ENCODE measurements at regions of chr12 and their contacts with region 1.

Region 1: GRCh38 chr12:52307836-52308805 is 13.1 kb downstream of the KRT83 start:
- DNase-seq: peak; percentile 23 to 83
- H3K4me3 ChIP-seq: peak overlapping the region; percentile 39 to 67 (median 61)
- H3K27ac ChIP-seq: no peak overlapping the region
- H3K4me1 ChIP-seq: peaks cover 0 to 4% (median 0%) of the 10 kb centered on the region in 4 experiments; a peak in 1 of 7 replicates
- H3K27me3 ChIP-seq: peaks cover 21 to 47% (median 36%) of the 10 kb centered on the region in 4 experiments
- CTCF ChIP-seq: peak in 2 of 3 experiments; percentile 14 to 24; a peak in 2 of 4 replicates
- EP300 ChIP-seq: no peak
- POLR2A ChIP-seq: no peak
- RAD21 ChIP-seq: peak in 1 of 2 experiments; percentile 15; a peak in 1 of 4 replicates

Region 2: GRCh38 chr12:52147367-52147972 is 160.7 kb before region 1 on chr12:
- CTCF ChIA-PET with region 1: interaction called, 22 read pairs
- POLR2A ChIA-PET with region 1: no interaction called
- DNase-seq: no peak
- H3K4me3 ChIP-seq: no peak overlapping the region
- H3K27ac ChIP-seq: peak overlapping the region; percentile 73
- H3K4me1 ChIP-seq: peaks cover 8 to 44% (median 19%) of the 10 kb centered on the region in 4 experiments
- H3K27me3 ChIP-seq: no peaks in the 10 kb centered on the region; a peak in 1 of 7 replicates
- CTCF ChIP-seq: no peak
- EP300 ChIP-seq: no peak
- POLR2A ChIP-seq: no peak
- RAD21 ChIP-seq: no peak

Region 3: DNA sequence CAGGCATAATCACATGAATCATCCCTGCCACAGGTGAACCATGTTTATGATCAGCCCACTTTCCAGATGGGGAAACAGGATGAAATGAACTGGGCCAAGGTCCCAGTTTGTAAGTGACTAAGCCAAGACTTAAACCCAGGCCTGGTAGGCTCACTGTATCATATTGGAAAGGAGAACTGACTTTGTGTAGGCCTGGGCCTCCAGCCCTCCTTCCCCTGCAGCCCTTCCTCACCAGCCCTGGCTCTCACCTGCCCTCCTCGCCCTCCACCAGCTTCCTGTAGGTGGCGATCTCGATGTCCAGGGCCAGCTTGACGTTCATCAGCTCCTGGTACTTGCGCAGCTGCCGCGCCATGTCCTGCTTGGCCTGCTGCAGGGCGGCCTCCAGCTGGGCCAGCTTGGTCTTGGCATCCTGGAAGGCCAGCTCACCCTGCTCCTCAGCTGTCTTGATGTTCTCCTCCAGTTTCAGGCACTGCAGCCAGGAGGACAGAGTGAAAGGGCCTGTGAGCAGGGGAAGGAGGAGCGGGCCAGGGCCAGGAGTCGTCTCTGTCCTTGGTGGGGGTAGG is 136.1 kb before region 1 on chr12:
- CTCF ChIA-PET with region 1: interaction called, 11 read pairs
- POLR2A ChIA-PET with region 1: no interaction called
- DNase-seq: peak in 1 of 2 experiments; percentile 80
- H3K4me3 ChIP-seq: no peak overlapping the region
- H3K27ac ChIP-seq: no peak overlapping the region
- H3K4me1 ChIP-seq: peaks cover 0 to 2% (median 0%) of the 10 kb centered on the region in 4 experiments; a peak in 2 of 7 replicates
- H3K27me3 ChIP-seq: no peaks in the 10 kb centered on the region
- CTCF ChIP-seq: peak; percentile 79 to 86 (median 81)
- EP300 ChIP-seq: no peak
- POLR2A ChIP-seq: no peak
- RAD21 ChIP-seq: peak; percentile 47 to 67; a peak in 3 of 4 replicates

Region 4: DNA sequence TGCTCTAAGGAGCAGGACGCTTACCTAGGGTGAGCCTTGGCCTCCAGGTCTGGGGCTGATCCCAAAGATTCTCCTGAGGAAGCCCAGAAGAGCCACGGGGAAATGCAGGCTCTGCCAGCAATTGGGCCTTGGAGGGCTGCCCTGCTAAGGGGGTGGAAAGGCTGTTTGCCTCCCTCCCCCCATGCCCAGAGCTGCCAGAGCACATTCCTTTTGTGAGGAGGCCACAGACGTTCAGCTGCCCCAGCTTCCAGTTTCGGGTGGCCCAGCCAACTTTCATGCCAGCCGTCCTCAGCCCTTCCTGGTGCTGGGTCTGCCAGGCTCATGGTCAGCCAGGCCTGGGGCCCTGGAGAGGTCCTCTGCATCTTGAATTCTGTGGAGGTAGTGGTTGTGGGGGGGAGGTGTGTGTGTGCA is 59.1 kb before region 1 on chr12:
- CTCF ChIA-PET with region 1: interaction called, 19 read pairs
- POLR2A ChIA-PET with region 1: no interaction called
- DNase-seq: no peak
- H3K4me3 ChIP-seq: no peak overlapping the region
- H3K27ac ChIP-seq: no peak overlapping the region
- H3K4me1 ChIP-seq: peaks cover 0 to 12% (median 5%) of the 10 kb centered on the region in 4 experiments; a peak in 5 of 7 replicates
- H3K27me3 ChIP-seq: peaks cover 4 to 29% (median 23%) of the 10 kb centered on the region in 4 experiments
- CTCF ChIP-seq: no peak
- EP300 ChIP-seq: no peak
- POLR2A ChIP-seq: no peak
- RAD21 ChIP-seq: no peak

Region 5: DNA sequence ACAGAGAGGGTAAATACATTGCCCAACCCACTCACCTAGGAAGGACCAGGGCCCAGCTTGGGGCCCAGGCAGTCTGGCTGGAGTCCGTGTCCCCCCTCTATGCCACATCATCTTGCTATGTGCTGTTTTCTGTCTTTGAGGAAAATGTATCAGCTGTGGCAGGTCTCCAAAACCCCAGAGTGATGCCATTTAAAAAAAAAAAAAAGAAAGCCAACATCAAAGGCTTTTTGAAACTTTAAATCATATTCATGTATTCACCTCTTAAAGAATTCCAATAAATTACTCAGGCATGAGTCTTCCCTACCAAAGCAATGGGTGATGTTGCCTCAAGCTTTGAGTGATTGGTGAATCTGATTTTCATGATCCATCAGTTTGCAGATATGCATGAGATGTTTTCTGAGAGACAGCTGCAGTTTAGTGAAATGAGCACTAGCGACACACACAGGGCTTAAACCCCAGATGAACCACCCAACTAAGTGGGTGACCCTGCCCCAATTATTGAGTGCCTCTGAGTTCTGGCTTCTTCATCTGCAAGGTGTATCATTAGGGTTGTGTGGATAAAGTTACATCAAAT is 22.9 kb before region 1 on chr12:
- CTCF ChIA-PET with region 1: interaction called, 99 read pairs
- POLR2A ChIA-PET with region 1: no interaction called
- DNase-seq: no peak
- H3K4me3 ChIP-seq: no peak overlapping the region
- H3K27ac ChIP-seq: no peak overlapping the region
- H3K4me1 ChIP-seq: peaks cover 0 to 2% (median 0%) of the 10 kb centered on the region in 4 experiments; a peak in 1 of 7 replicates
- H3K27me3 ChIP-seq: no peaks in the 10 kb centered on the region
- CTCF ChIP-seq: no peak
- EP300 ChIP-seq: no peak
- POLR2A ChIP-seq: no peak
- RAD21 ChIP-seq: no peak

Region 6: GRCh38 chr12:52295663-52296062 is 12.5 kb before region 1 on chr12:
- CTCF ChIA-PET with region 1: interaction called, 16 read pairs
- POLR2A ChIA-PET with region 1: no interaction called
- DNase-seq: no peak
- H3K4me3 ChIP-seq: no peak overlapping the region
- H3K27ac ChIP-seq: no peak overlapping the region
- H3K4me1 ChIP-seq: 0 out of 7 replicates have a peak, but pooled peaks cover 0 to 2% (median 0%) of the 10 kb centered on the region in 4 experiments
- H3K27me3 ChIP-seq: peaks cover 0 to 2% (median 0%) of the 10 kb centered on the region in 4 experiments; a peak in 1 of 7 replicates
- CTCF ChIP-seq: no peak
- EP300 ChIP-seq: no peak
- POLR2A ChIP-seq: no peak
- RAD21 ChIP-seq: no peak

Region 7: GRCh38 chr12:52327052-52327829 is 19.1 kb after region 1 on chr12:
- CTCF ChIA-PET with region 1: interaction called, 353 read pairs
- POLR2A ChIA-PET with region 1: interaction called, 3 read pairs
- DNase-seq: peak; percentile 67 to 75
- H3K4me3 ChIP-seq: no peak overlapping the region
- H3K27ac ChIP-seq: no peak overlapping the region
- H3K4me1 ChIP-seq: no peaks in the 10 kb centered on the region
- H3K27me3 ChIP-seq: no peaks in the 10 kb centered on the region
- CTCF ChIP-seq: peak; percentile 97 to 100 (median 100)
- EP300 ChIP-seq: no peak
- POLR2A ChIP-seq: no peak
- RAD21 ChIP-seq: peak; percentile 81 to 88

Measured in H1 (cell line).